ENCODE measurements at regions of chr7 and their contacts with region 1.

Region 1: GRCh38 chr7:74709880-74710671 is 52.6 kb downstream of the GTF2I start:
- DNase-seq: no peak
- ATAC-seq: no peak
- H3K4me3 Mint-ChIP-seq: no peak overlapping the region
- H3K27ac Mint-ChIP-seq: no peak overlapping the region
- H3K4me1 Mint-ChIP-seq: no peaks in the 10 kb centered on the region
- H3K27me3 Mint-ChIP-seq: no peaks in the 10 kb centered on the region
- CTCF ChIP-seq: no peak

Region 2: DNA sequence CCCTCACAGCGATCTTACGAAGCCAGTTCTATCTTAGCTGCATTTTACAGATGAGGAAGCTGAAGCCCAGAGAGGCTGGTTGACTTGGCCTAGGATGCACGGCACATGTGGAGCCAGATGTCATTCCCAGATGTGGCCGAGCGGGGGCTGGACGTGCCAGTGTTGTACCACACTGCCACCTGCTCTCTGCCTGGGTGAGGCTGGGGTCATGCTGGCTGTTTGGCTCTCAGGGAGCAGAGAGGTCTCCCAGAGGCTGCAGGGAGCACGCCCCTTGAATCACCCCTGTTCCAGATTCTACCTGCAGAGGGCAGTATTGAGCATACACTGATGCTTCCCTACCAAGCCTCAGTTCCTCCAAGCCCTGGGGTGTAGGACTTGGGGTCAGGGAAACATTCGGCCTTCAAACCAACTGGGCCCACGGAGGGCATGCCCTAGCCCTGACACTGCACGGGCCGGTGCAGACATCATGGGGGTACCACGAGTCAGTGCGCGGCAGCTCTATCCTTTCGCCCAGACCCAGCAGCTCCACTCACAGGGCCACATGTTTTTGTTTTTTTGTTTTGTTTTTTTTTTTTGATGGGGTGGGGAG is 260.2 kb before region 1 on chr7:
- CTCF ChIA-PET with region 1: no interaction called
- POLR2A ChIA-PET with region 1: no interaction called
- intact Hi-C with region 1: loop called (anchors 5 kb)
- DNase-seq: peak; percentile 29
- ATAC-seq: peak; percentile 51
- H3K4me3 Mint-ChIP-seq: no peak overlapping the region
- H3K27ac Mint-ChIP-seq: no peak overlapping the region
- H3K4me1 Mint-ChIP-seq: peaks cover 12% of the 10 kb centered on the region
- H3K27me3 Mint-ChIP-seq: peaks cover 3% of the 10 kb centered on the region
- CTCF ChIP-seq: no peak

Region 3: GRCh38 chr7:74525880-74526279 is 184.2 kb before region 1 on chr7:
- CTCF ChIA-PET with region 1: no interaction called
- POLR2A ChIA-PET with region 1: no interaction called
- intact Hi-C with region 1: no loop called
- DNase-seq: no peak
- ATAC-seq: no peak
- H3K4me3 Mint-ChIP-seq: no peak overlapping the region
- H3K27ac Mint-ChIP-seq: no peak overlapping the region
- H3K4me1 Mint-ChIP-seq: no peaks in the 10 kb centered on the region
- H3K27me3 Mint-ChIP-seq: no peaks in the 10 kb centered on the region
- CTCF ChIP-seq: no peak

Region 4: DNA sequence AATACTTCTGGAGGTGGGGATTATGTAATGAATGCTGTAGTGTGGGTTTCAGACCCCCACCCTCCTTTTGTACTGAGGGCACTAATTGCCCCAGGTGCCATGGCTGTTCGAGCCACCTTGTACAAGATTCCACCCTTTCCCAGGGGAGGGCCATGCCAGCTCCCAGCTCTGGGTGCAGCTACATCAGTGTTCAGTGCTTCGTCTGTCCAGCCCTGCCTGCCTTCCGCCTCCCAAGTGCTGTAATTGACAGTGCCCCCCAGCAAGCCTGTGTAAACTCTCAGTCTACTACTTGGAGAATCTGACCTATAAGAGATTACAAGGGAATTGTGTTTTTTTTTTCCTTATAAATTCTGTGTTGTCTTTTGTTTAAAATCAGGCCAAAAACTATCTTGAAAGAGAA is 19.6 kb before region 1 on chr7:
- CTCF ChIA-PET with region 1: no interaction called
- POLR2A ChIA-PET with region 1: interaction called, 5 read pairs
- intact Hi-C with region 1: loop called (anchors 2 kb)
- DNase-seq: no peak
- ATAC-seq: no peak
- H3K4me3 Mint-ChIP-seq: no peak overlapping the region
- H3K27ac Mint-ChIP-seq: no peak overlapping the region
- H3K4me1 Mint-ChIP-seq: peaks cover 14% of the 10 kb centered on the region
- H3K27me3 Mint-ChIP-seq: no peaks in the 10 kb centered on the region
- CTCF ChIP-seq: no peak

Measured in activated B cell treated with CpG ODN at 0.5 μM for 24 hours (primary cell).